Motor neuron (in vitro differentiated cells): ENCODE measurements at regions of chr12 and their contacts with region 1.

Region 1: GRCh38 chr12:32755654-32756475 is at the start of gene YARS2:
- ATAC-seq: peak; percentile 84 to 97 (median 94)
- H3K4me3 ChIP-seq: peak within 1 kb of the TSS; percentile 79 to 97 (median 95)
- H3K27ac ChIP-seq: peak within 1 kb of the TSS; percentile 88 to 90
- H3K4me1 ChIP-seq: peaks cover 14 to 17% of the 10 kb centered on the region in 2 donors
- total RNA-seq, gene YARS2: 13.3 to 30.4 (median 19.5) TPM

Region 2: GRCh38 chr12:32843528-32844095 is 87.7 kb after region 1 on chr12:
- in situ Hi-C with region 1: no loop called
- ATAC-seq: peak in 1 of 8 experiments; percentile 40
- H3K4me3 ChIP-seq: no peak overlapping the region
- H3K27ac ChIP-seq: no peak overlapping the region
- H3K4me1 ChIP-seq: peaks cover 0 to 5% of the 10 kb centered on the region in 2 donors

Region 3: GRCh38 chr12:32918890-32919801 is 163.3 kb after region 1 on chr12:
- in situ Hi-C with region 1: loop called in 1 of 9 experiments (anchors 10 kb)
- ATAC-seq: peak in 1 of 8 experiments; percentile 65
- H3K4me3 ChIP-seq: no peak overlapping the region
- H3K27ac ChIP-seq: no peak overlapping the region
- H3K4me1 ChIP-seq: no peaks in the 10 kb centered on the region

Region 4: GRCh38 chr12:32947206-32948067 is 191.6 kb after region 1 on chr12:
- in situ Hi-C with region 1: loop called in 1 of 9 experiments (anchors 25 kb)
- ATAC-seq: peak in 7 of 8 experiments; percentile 26 to 99 (median 97)
- H3K4me3 ChIP-seq: no peak overlapping the region
- H3K27ac ChIP-seq: no peak overlapping the region
- H3K4me1 ChIP-seq: peaks cover 6 to 7% of the 10 kb centered on the region in 2 donors

Region 5: GRCh38 chr12:33439282-33440011 is 683.6 kb after region 1 on chr12 and contains the start of gene SYT10:
- in situ Hi-C with region 1: no loop called
- ATAC-seq: peak in 7 of 8 experiments; percentile 50 to 90 (median 82)
- H3K4me3 ChIP-seq: peak within 1 kb of the TSS; percentile 40 to 49 (median 48)
- H3K27ac ChIP-seq: no peak within 1 kb of the TSS
- H3K4me1 ChIP-seq: peaks cover 0 to 7% of the 10 kb centered on the region in 2 donors
- total RNA-seq, gene SYT10: 0.07 to 2.4 (median 0.35) TPM in 6 of 8 experiments, not detected in the others

Region 6: DNA sequence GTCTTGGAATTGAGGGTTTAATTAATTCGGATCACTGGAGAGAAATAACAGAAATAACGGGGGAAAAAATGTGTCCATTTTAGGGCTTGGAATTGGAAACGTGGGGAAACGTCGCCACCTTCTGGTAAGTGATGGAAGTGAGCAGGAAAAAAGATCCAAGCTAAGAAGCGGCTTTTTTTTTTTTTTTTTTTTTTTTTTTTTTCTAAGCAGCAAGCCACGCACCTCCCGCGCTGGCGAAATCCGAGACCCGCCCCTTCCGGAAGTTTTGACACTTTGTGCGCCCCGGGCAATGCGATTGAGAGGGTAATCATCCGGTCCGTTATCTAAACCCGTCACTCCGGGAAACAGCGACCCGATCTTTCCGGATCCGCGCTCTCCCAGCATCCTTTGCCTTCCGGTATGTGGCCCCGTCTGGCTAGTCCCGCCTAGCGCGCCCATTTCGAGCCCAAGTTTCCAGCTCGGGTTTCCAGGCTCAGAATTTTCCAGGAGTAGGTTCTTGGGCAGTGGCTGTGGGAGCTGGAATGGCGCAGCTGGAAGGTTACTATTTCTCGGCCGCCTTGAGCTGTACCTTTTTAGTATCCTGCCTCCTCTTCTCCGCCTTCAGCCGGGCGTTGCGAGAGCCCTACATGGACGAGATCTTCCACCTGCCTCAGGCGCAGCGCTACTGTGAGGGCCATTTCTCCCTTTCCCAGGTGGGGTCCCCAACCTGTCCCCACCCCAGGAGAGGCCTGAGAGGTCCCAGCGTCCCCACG is 1266.4 kb after region 1 on chr12 and contains the start of gene ALG10:
- in situ Hi-C with region 1: loop called in 8 of 9 experiments (anchors 10 to 25 kb)
- ATAC-seq: peak; percentile 99 to 100 (median 100)
- H3K4me3 ChIP-seq: peak within 1 kb of the TSS; percentile 56 to 85 (median 76)
- H3K27ac ChIP-seq: peak within 1 kb of the TSS; percentile 60 to 72
- H3K4me1 ChIP-seq: peaks cover 5 to 15% of the 10 kb centered on the region in 2 donors
- total RNA-seq, gene ALG10: 2.5 to 14.8 (median 10.4) TPM

Region 7: DNA sequence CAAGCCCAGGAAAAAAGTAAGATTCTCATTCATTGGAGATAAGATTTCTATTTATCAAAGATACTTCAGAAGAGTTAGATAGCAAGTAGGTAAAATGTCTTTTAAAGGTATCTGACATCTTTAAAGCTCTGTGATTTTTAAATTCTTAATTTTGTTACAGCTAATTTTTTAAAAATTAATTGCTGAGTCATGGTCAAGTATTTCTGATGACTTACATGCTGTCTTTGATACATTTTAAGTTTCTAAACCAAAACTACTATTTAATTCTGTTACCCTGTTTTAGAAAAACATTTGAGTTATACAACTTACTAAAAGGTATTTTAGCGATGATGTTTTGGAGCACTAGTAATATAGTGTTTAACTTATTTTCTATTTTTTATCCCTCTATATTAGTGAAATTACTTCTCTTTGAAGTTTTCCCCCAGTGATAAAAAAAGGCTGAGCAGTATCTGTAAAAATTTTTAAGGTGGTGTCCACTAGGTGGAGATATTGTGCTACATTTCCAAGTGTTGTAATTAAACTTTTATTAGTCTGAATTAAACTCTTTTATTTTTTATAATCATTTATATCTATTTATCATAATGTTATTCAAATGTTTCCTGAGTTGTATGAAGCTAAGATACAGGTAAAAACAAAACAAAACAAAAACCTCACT is 1277.9 kb after region 1 on chr12:
- in situ Hi-C with region 1: loop called in 2 of 9 experiments (anchors 10 to 25 kb)
- ATAC-seq: no peak
- H3K4me3 ChIP-seq: no peak overlapping the region
- H3K27ac ChIP-seq: no peak overlapping the region
- H3K4me1 ChIP-seq: no peaks in the 10 kb centered on the region